ENCODE measurements at regions of chr16 and their contacts with region 1.

Region 1: DNA sequence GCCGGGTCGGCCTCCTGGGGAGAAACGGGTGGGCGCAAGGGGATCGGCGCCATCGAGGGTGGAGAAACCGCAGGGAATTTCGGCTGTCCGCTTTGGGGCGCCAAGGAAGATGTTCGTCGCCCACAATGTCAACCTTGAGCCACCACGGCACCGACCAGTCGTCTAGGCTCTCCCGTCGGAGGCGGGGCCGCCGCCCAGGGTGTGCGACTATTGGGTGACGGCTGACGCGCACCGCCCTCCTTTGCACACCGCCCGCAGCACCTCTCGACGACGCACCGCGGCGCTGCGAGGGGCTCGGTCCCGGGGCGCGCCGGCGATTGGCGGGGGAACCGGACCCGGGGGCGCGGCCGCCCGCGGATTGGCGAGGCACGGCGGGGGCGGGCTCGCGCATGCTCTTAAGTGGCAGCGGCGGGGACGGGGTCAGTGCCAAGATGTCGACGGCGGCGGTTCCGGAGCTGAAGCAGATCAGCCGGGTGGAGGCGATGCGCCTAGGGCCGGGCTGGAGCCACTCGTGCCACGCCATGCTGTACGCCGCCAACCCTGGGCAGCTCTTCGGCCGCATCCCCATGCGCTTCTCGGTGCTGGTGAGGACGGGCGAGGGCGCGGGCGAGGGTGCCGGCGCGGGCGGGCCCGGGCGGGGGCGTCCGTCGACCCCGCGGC is at the start of gene NUDT16L1:
- DNase-seq: peak; percentile 98 to 99
- ATAC-seq: peak; percentile 95
- H3K4me3 ChIP-seq: peak within 1 kb of the TSS; percentile 55 to 74
- H3K27ac ChIP-seq: peak within 1 kb of the TSS in 1 of 2 donors; percentile 62
- H3K4me1 ChIP-seq: no peaks in the 10 kb centered on the region
- H3K27me3 ChIP-seq: no peaks in the 10 kb centered on the region
- total RNA-seq, gene NUDT16L1: 11.1 to 16.2 TPM

Region 2: DNA sequence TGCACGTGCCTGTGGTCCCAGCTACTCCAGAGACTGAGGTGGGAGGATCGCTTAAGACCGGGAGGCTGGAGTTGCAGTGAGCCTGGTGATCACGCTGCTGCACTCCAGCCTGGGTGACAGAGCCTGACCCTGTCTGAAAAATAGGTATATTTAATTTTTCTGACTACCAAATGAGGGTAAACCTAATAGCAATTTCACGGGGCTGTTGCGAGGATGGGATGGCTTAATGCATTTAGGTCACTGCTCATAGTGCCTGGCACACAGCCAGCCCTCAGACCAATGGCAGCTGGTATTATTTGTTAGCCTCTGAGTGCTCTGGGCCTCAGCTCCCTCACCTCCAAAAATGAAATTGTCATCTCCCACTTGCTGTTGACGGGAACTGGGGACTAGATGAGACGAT is 149.0 kb before region 1 on chr16:
- intact Hi-C with region 1: no loop called
- DNase-seq: no peak
- ATAC-seq: no peak
- H3K4me3 ChIP-seq: no peak overlapping the region
- H3K27ac ChIP-seq: no peak overlapping the region
- H3K4me1 ChIP-seq: no peaks in the 10 kb centered on the region
- H3K27me3 ChIP-seq: no peaks in the 10 kb centered on the region

Region 3: DNA sequence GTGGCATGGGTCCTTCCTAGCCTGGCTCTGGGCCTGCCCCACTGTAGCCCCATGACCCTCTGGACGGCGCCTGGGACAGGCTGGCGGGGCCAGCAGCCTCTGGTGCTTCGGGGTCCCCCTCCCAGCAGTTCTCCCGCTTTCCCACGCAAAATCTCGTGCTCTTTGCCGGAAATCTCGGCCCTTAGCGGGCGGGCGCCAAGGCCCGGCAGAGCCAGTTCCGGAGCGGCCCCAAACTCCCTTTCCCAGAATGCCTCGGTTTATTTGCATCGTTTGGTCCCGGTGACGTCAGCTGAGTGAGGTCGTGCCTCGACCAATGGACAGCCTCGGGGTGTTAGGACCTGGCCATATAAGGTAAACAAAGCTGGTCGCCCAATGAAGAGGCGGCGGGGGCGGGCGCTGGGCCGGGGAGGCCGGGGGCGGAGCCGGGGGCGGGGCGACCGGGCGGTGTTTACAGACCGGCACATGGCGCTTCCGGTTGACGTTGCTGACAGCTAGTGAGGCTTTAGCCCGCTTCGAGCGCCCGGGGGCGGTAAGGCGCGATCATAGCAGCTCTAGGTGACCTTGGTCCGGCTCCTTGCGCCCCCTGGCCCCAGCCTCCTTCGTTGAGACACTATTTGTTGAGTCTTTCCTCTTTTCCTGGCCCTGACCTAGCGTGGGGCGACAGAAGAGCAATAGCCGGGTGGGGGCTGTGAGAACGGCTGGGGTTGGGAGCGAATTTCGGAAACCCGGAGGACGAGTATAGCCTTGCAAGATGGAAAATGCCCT is 77.2 kb before region 1 on chr16:
- intact Hi-C with region 1: loop called (anchors 5 kb)
- DNase-seq: peak; percentile 99 to 100
- ATAC-seq: peak; percentile 95
- H3K4me3 ChIP-seq: peak overlapping the region; percentile 41 to 65
- H3K27ac ChIP-seq: peak overlapping the region; percentile 82 to 89
- H3K4me1 ChIP-seq: no peaks in the 10 kb centered on the region
- H3K27me3 ChIP-seq: no peaks in the 10 kb centered on the region

Region 4: GRCh38 chr16:4766874-4767628 is 73.6 kb after region 1 on chr16 and contains the start of gene ZNF500:
- intact Hi-C with region 1: loop called in 1 of 2 experiments (anchors 1 kb)
- DNase-seq: peak; percentile 99 to 100
- ATAC-seq: peak; percentile 95
- H3K4me3 ChIP-seq: peak within 1 kb of the TSS; percentile 77 to 94
- H3K27ac ChIP-seq: peak within 1 kb of the TSS in 1 of 2 donors; percentile 73
- H3K4me1 ChIP-seq: no peaks in the 10 kb centered on the region
- H3K27me3 ChIP-seq: no peaks in the 10 kb centered on the region
- total RNA-seq, gene ZNF500: 13.0 to 17.0 TPM

Measured in aorta (tissue), 5 donors.